PC-3 (cell line): ENCODE measurements at regions of chr7 and their contacts with region 1.

Region 1: DNA sequence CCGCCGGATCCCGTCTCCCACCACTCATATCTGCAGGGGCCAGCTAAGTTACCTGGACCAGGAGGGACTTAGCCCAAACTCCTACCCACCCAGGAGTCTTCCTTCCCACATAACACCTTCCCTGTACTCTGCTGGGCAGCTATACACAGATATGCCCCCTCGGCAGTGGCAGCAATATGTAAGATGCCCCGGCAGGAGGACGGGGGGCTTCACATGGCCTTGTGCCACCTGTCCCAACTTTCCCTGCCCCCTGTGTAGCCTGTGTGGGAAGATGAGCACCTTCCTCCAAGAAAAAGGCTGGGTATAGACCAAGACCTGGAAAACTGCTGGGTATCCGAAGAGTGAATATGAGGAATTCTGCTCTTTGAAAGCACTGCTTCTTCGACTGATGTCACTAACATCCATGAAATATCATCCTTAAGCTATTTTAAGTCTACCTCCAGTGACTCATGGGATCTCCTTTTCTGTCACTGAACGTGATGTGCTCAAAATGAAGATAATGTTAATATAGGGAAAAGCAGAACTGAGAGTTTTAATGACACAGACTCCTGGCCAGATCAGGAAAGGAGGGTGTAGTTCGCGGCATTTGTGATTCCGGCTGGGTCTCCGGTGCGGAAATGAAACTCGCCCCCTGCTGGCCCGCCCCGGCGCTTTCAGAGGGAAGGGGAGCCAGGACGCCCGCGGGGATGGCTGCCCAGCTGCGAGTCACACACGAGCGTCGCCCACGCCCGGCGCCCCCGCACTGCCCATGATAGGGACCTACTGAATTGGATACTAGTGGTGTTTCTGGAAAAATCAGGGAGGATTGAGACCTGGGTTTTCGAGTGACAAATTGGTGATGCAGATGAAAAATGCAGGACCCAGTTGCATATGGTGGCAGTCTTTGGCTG is 256.9 kb upstream of the NFE2L3 start:
- DNase-seq: peak; percentile 52
- ATAC-seq: peak; percentile 47
- H3K4me3 ChIP-seq: peak overlapping the region; percentile 12; the same call in 1 of the 2 replicates
- H3K27ac ChIP-seq: no peak overlapping the region
- H3K4me1 ChIP-seq: peaks cover 5% of the 10 kb centered on the region; the same call in 1 of the 2 replicates
- H3K27me3 ChIP-seq: no peaks in the 10 kb centered on the region
- CTCF ChIP-seq: peak; percentile 74

Region 2: DNA sequence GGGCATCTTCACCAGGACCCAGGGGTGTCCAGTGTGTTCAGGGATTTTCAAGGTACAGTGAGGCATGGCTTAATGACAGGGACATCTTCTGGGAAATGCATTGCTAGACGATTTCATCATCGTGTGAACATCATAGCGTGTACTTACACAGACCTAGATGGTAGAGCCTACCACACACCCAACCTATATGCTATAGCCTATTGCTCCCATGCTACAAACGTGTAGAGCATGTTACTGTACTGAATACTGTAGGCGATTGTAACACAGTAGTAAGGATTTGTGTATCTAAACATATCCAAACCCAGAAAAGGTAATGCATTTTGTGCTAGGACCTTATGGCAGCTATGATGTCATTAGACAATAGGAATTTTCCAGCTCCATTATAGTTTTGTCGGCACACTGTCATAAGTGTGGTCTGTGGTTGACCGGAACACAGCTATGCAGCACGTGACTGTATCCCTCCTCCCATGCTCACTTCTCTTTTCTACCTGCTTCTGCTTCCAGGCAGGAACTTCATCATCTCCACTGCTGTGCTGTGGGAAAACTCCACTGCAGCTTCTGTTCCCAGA is 159.4 kb before region 1 on chr7:
- CTCF ChIA-PET with region 1: no interaction called
- POLR2A ChIA-PET with region 1: no interaction called
- intact Hi-C with region 1: no loop called
- DNase-seq: no peak
- ATAC-seq: no peak
- H3K4me3 ChIP-seq: no peak overlapping the region
- H3K27ac ChIP-seq: no peak overlapping the region
- H3K4me1 ChIP-seq: no peaks in the 10 kb centered on the region
- H3K27me3 ChIP-seq: peaks cover 66% of the 10 kb centered on the region
- CTCF ChIP-seq: no peak

Region 3: DNA sequence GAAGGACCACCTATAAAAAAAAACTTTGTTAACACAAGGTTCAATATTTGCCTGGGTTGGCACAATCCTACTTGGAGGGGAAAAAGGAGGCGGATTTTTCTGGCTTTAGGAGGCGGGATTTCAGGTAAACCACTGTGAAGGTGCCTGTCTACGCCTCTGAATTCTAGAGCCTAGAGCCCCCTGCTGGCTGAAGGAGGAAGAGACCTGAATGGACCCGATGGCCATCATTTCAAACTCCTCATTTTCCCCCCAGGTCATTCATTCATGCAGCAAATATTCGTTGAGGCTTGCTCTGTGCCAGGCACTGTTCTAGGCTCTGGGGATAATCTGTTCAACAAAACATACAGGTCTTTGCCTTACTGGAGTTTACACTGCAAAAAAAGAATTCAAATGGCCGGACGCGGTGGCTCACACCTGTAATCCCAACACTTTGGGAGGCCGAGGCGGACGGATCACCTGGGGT is 166.6 kb after region 1 on chr7:
- CTCF ChIA-PET with region 1: interaction called, 4 read pairs
- POLR2A ChIA-PET with region 1: no interaction called
- intact Hi-C with region 1: loop called (anchors 1 kb)
- DNase-seq: peak; percentile 80
- ATAC-seq: peak; percentile 93
- H3K4me3 ChIP-seq: peak overlapping the region; percentile 19; the same call in 1 of the 2 replicates
- H3K27ac ChIP-seq: no peak overlapping the region
- H3K4me1 ChIP-seq: no peaks in the 10 kb centered on the region
- H3K27me3 ChIP-seq: peaks cover 20% of the 10 kb centered on the region
- CTCF ChIP-seq: peak; percentile 79

Region 4: GRCh38 chr7:26156454-26157365 is 261.6 kb after region 1 on chr7:
- CTCF ChIA-PET with region 1: no interaction called
- POLR2A ChIA-PET with region 1: no interaction called
- intact Hi-C with region 1: loop called (anchors 2 kb)
- DNase-seq: peak; percentile 93
- ATAC-seq: peak; percentile 48
- H3K4me3 ChIP-seq: peak overlapping the region; percentile 62; the same call in 1 of the 2 replicates
- H3K27ac ChIP-seq: peak overlapping the region; percentile 96
- H3K4me1 ChIP-seq: peaks cover 74% of the 10 kb centered on the region
- H3K27me3 ChIP-seq: no peaks in the 10 kb centered on the region
- CTCF ChIP-seq: no peak

Region 5: GRCh38 chr7:26187380-26188205 is 292.4 kb after region 1 on chr7:
- CTCF ChIA-PET with region 1: no interaction called
- POLR2A ChIA-PET with region 1: no interaction called
- intact Hi-C with region 1: loop called (anchors 5 kb)
- DNase-seq: peak; percentile 24
- ATAC-seq: peak; percentile 15
- H3K4me3 ChIP-seq: no peak overlapping the region
- H3K27ac ChIP-seq: no peak overlapping the region
- H3K4me1 ChIP-seq: no peaks in the 10 kb centered on the region
- H3K27me3 ChIP-seq: no peaks in the 10 kb centered on the region
- CTCF ChIP-seq: no peak

Region 6: DNA sequence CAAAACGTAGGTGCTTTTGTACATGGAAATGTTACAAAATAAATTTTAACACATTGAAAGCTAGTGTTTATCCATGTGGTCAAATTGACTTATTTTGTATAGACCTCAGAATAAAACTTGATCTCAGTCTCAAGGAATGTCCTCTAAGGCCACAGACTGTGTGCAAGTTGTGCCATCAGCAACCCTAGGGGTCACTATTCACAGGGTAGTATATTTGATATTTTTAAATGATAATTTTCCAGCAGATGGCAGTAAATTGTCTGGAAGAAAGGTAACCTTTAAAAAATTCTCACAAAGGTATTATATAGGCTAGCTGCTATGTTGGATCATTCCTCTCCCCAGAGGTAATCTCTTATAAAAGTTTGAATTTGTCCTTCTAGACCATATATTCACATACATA is 383.6 kb after region 1 on chr7:
- CTCF ChIA-PET with region 1: interaction called, 3 read pairs
- POLR2A ChIA-PET with region 1: no interaction called
- intact Hi-C with region 1: loop called (anchors 2 kb)
- DNase-seq: peak; percentile 65
- ATAC-seq: peak; percentile 98
- H3K4me3 ChIP-seq: no peak overlapping the region
- H3K27ac ChIP-seq: no peak overlapping the region
- H3K4me1 ChIP-seq: no peaks in the 10 kb centered on the region
- H3K27me3 ChIP-seq: no peaks in the 10 kb centered on the region
- CTCF ChIP-seq: peak; percentile 79

Region 7: GRCh38 chr7:26500749-26501352 is 605.7 kb after region 1 on chr7:
- CTCF ChIA-PET with region 1: no interaction called
- POLR2A ChIA-PET with region 1: no interaction called
- intact Hi-C with region 1: loop called (anchors 10 kb)
- DNase-seq: peak; percentile 58
- ATAC-seq: peak; percentile 71
- H3K4me3 ChIP-seq: no peak overlapping the region
- H3K27ac ChIP-seq: no peak overlapping the region
- H3K4me1 ChIP-seq: no peaks in the 10 kb centered on the region
- H3K27me3 ChIP-seq: no peaks in the 10 kb centered on the region
- CTCF ChIP-seq: peak; percentile 79